Caco-2 (cell line): ENCODE measurements at regions of chr3 and their contacts with region 1.

Region 1: DNA sequence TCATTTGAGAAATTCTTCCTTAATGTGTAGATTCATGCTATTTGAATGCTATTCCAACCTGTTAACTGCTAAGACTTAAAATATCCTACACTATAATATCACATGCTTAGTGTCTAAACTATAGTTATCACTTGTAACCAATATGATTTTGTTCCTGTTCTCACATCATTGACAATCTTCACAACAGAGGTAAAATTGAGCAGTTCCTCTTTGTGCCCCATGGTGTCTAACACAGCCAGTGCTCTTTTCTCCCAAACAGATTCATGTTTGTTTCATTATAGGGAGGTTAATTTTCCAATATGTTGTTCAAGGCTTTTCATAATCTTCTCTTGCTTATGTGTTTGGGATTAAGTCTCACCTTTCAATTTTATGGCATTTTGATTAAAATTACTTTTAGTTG is 591.1 kb downstream of the ZPLD1 start:
- DNase-seq: no peak
- H3K4me3 ChIP-seq: no peak overlapping the region
- H3K4me3 Mint-ChIP-seq: no peak overlapping the region
- H3K27ac Mint-ChIP-seq: no peak overlapping the region
- H3K4me1 ChIP-seq: no peaks in the 10 kb centered on the region
- H3K4me1 Mint-ChIP-seq: no peaks in the 10 kb centered on the region
- H3K27me3 ChIP-seq: no peaks in the 10 kb centered on the region
- H3K27me3 Mint-ChIP-seq: no peaks in the 10 kb centered on the region
- CTCF ChIP-seq: no peak

Region 2: GRCh38 chr3:102979682-102980369 is 46.1 kb before region 1 on chr3:
- CTCF ChIA-PET with region 1: no interaction called
- POLR2A ChIA-PET with region 1: no interaction called
- intact Hi-C with region 1: loop called (anchors 1 kb)
- DNase-seq: no peak
- H3K4me3 ChIP-seq: no peak overlapping the region
- H3K4me3 Mint-ChIP-seq: no peak overlapping the region
- H3K27ac Mint-ChIP-seq: no peak overlapping the region
- H3K4me1 ChIP-seq: no peaks in the 10 kb centered on the region
- H3K4me1 Mint-ChIP-seq: no peaks in the 10 kb centered on the region
- H3K27me3 ChIP-seq: no peaks in the 10 kb centered on the region
- H3K27me3 Mint-ChIP-seq: no peaks in the 10 kb centered on the region
- CTCF ChIP-seq: no peak